ENCODE measurements at regions of chr19 and their contacts with region 1.

Region 1: DNA sequence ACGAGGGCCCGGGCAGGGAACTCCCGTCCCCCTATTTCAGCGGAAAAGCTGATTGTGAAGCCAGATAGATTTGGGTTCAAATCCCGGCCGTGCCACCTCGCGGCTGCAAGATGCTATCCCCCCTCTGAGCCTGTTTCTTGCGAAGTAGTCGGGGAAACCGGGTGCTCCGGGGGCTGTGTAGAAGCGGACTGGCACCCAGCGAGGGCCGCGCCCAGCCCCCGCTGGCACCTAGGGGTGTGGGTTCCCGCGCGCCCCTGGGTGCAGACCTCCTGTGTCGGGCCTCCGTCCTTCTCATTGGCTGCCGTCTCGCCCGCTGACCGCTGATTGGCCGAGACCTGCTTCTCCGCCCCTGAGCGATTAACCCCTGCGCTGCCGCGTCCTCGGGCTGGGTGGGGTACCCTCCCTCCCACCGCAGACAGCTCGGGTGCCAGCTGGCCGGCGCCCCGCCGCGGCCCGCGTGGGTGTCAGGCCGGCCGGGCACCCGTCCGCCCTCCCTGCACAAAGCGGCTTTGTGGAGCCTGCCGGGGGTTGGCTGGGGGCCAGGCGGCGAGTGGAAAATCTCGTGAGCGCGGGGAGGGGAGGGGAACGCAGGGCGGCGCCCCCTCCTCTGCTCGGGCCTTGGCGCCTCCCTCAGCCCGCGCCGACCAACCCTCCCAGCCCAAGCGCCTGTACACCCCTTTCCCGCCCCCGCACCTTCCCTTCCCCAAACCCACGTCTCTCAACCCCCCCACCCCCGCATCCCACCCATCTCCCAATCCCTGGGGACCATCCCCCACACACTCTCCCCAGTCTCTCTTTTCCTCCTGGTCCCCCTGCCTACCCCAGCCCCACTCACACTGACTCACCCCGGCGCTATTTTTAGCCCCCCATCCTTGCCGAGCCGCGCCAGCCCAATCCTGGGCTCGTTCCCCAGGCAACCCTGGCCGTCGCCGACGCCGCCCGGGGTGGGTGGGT is 11.4 kb downstream of the CIC start:
- DNase-seq: no peak
- H3K4me3 ChIP-seq: peak overlapping the region; percentile 68 to 75
- H3K27ac ChIP-seq: peak overlapping the region; percentile 100
- H3K4me1 ChIP-seq: peaks cover 82% of the 10 kb centered on the region
- H3K27me3 ChIP-seq: no peaks in the 10 kb centered on the region
- CTCF ChIP-seq: no peak
- POLR2A ChIP-seq: peak in 1 of 2 donors; percentile 39

Region 2: GRCh38 chr19:42254989-42255765 is 25.3 kb before region 1 on chr19 and contains the start of gene ERF:
- intact Hi-C with region 1: loop called (anchors 2 kb)
- DNase-seq: no peak
- H3K4me3 ChIP-seq: peak within 1 kb of the TSS; percentile 97
- H3K27ac ChIP-seq: peak within 1 kb of the TSS; percentile 100
- H3K4me1 ChIP-seq: peaks cover 48% of the 10 kb centered on the region
- H3K27me3 ChIP-seq: no peaks in the 10 kb centered on the region
- CTCF ChIP-seq: no peak
- POLR2A ChIP-seq: peak; percentile 95 to 99
- total RNA-seq, gene ERF: 44.7 TPM

Region 3: DNA sequence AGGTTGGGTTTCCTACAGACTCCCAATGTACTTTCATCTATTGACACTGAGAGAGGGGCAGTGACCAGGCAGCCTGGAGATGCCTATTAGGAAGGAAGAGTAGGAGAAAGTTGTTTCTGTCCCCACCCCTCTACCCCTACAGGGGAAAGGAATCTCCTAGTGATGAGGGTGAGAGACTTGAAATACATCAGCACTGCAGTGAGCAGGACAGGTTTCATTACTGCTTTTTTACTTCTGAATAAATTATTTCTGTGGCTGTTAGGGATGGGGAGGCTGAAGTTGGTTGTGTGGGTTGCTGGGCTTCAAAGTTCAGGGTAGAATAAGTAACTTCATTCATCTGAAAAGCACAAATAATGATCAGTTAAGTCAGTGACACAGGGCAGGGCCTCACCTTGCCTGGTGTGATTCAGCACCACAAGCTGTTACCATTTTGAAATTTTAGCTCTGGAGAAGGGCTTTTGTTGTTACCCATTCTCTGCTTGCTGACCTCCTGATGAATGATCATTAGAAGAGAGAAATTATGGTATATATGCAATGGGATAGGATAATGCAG is 228.5 kb after region 1 on chr19:
- intact Hi-C with region 1: no loop called
- DNase-seq: no peak
- H3K4me3 ChIP-seq: no peak overlapping the region
- H3K27ac ChIP-seq: no peak overlapping the region
- H3K4me1 ChIP-seq: no peaks in the 10 kb centered on the region
- H3K27me3 ChIP-seq: no peaks in the 10 kb centered on the region
- CTCF ChIP-seq: no peak
- POLR2A ChIP-seq: no peak

Measured in vagina (tissue), 2 donors.